Posterior vena cava (tissue), 2 donors: ENCODE measurements at regions of chr3 and their contacts with region 1.

Region 1: GRCh38 chr3:69161587-69162307 is 39.4 kb upstream of the LMOD3 start:
- DNase-seq: no peak

Region 2: GRCh38 chr3:69080233-69080920 is 81.4 kb before region 1 on chr3 and contains the start of gene UBA3:
- intact Hi-C with region 1: no loop called
- DNase-seq: peak; percentile 96
- total RNA-seq, gene UBA3: 53.0 to 57.9 TPM

Region 3: DNA sequence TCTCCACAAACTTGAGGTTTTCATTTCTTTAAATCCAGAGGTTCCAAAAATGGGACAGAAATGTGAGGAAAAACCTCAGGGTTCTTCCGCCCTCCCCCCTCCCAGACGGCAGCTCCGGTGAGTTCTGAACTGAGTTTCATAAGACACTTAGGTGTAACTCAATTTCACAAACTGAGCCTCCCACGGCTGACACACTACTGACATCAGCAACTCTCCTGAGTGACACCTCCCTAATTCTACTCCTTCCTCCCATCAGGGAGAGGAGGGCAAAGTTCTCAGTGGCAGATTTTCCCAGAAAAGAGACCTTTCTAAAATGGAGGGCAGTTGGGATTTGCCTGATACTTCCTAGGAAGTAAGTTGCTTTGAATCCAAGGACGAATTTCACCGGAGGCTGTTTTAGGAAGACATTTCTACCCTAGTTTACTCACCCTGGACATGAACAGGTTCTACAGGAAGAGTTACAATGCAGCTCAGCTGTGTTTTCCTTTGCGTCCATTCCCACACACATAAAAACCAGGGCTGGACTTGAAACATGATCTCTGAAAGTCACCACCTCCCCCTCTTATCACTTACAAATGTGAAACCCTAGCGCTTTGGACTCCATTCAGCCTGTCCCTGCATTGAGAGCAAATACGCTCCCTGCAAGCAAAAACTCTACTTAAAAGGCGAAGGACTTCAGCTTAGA is 38.8 kb after region 1 on chr3:
- intact Hi-C with region 1: no loop called
- DNase-seq: no peak

Region 4: DNA sequence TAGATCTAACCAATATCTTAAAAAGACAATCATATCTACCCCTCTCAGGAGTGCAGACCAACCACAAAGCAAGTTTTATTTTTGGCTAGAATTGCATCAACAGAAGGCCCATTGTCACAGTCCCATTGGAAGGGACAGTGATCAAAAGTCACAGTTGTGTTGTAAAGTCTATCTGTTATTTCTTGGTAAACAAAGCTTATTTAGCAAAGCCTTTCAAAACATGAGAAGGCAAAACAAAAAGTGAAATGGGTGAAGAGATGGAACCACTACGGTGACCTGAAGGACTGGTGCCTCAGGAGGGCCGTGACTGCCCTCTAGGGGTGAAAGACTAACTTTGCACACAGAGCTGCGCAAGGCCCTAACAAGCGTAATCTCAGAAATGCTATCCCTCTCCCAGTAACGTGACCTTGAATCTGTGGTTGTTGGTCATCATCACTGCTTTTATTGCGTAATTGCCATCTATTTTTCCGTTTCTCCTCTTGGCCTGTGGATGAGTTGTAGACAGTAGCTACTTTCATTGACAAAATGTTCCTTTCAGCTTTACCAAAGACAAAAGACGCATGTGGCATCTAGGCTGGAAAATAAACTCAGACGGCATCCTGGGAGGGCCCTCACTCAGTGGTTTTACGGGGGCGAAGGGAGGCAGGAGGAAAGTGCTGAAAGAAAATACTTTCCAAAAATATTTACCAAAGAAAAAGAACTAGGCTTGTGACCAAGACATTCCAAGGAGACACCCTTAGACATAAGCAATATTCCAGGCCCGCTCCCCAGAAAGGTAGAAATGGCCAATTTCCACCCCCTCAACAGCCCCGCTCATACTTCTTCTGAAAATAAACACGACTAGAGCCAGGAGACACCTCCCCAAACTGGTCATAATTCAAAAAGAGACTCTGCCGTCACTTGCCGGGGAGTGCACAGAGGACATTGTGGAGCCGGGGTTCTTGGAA is 144.8 kb after region 1 on chr3:
- intact Hi-C with region 1: loop called (anchors 5 to 10 kb)
- DNase-seq: peak; percentile 88

Region 5: DNA sequence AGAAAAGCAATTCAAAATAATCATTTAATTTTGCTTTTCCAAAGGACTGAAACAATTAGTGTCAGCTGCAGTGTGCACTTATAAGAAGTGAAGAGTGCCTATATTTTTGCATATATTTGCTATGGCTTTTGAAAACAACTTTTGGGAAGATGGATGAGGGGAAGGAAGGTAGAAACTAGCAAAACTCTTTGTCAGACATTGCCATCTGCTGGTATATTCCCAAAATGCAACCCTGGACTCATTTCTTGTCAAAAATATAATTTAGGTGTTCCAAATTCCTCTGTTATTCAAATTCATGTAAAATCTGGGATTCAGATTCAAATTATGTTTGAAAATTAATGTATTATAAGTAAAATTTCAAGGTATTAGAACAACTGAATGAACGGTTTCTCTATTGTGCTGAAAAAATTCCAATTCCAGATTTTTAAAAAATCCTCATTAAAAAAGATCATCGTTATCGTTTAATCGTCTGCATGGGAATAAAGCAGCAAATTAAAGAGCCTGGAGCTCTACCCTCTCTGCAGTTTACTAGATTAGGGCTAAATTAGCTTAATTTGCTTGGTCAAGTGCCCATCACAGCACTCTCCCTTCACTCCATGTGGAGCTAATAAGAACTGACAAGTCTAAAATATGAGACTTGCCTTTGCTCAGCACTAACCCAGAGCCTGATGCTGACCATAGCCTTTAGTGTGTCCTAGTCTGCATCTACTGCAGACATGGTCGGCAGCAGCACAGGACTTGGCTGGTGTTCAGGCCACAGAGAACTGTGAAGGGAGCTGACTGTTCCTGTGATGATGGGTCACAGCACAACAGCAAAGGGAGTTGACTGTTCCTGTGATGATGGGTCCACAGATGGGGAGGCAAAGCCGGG is 509.6 kb after region 1 on chr3:
- intact Hi-C with region 1: loop called in 1 of 2 experiments (anchors 10 kb)
- DNase-seq: no peak